CD4-positive, alpha-beta T cell (primary cell): ENCODE measurements at regions of chr1 and their contacts with region 1.

Region 1: GRCh38 chr1:25572708-25573600 is 29.5 kb downstream of the LDLRAP1 start:
- DNase-seq: peak in 13 of 14 experiments; percentile 31 to 73 (median 42)
- ATAC-seq: peak; percentile 82
- H3K4me3 ChIP-seq: no peak overlapping the region
- H3K4me3 Mint-ChIP-seq: no peak overlapping the region
- H3K27ac ChIP-seq: peak overlapping the region in 1 of 2 donors; percentile 8
- H3K27ac Mint-ChIP-seq: peak overlapping the region; percentile 87
- H3K4me1 ChIP-seq: peaks cover 58% of the 10 kb centered on the region
- H3K4me1 Mint-ChIP-seq: peaks cover 55% of the 10 kb centered on the region
- H3K27me3 ChIP-seq: no peaks in the 10 kb centered on the region
- H3K27me3 Mint-ChIP-seq: no peaks in the 10 kb centered on the region
- CTCF ChIP-seq: peak; percentile 73

Region 2: GRCh38 chr1:25392841-25393240 is 180.1 kb before region 1 on chr1:
- CTCF ChIA-PET with region 1: no interaction called
- POLR2A ChIA-PET with region 1: no interaction called
- intact Hi-C with region 1: no loop called
- DNase-seq: no peak
- ATAC-seq: no peak
- H3K4me3 ChIP-seq: no peak overlapping the region
- H3K4me3 Mint-ChIP-seq: no peak overlapping the region
- H3K27ac ChIP-seq: no peak overlapping the region
- H3K27ac Mint-ChIP-seq: no peak overlapping the region
- H3K4me1 ChIP-seq: no peaks in the 10 kb centered on the region
- H3K4me1 Mint-ChIP-seq: no peaks in the 10 kb centered on the region
- H3K27me3 ChIP-seq: no peaks in the 10 kb centered on the region
- H3K27me3 Mint-ChIP-seq: no peaks in the 10 kb centered on the region
- CTCF ChIP-seq: no peak

Region 3: DNA sequence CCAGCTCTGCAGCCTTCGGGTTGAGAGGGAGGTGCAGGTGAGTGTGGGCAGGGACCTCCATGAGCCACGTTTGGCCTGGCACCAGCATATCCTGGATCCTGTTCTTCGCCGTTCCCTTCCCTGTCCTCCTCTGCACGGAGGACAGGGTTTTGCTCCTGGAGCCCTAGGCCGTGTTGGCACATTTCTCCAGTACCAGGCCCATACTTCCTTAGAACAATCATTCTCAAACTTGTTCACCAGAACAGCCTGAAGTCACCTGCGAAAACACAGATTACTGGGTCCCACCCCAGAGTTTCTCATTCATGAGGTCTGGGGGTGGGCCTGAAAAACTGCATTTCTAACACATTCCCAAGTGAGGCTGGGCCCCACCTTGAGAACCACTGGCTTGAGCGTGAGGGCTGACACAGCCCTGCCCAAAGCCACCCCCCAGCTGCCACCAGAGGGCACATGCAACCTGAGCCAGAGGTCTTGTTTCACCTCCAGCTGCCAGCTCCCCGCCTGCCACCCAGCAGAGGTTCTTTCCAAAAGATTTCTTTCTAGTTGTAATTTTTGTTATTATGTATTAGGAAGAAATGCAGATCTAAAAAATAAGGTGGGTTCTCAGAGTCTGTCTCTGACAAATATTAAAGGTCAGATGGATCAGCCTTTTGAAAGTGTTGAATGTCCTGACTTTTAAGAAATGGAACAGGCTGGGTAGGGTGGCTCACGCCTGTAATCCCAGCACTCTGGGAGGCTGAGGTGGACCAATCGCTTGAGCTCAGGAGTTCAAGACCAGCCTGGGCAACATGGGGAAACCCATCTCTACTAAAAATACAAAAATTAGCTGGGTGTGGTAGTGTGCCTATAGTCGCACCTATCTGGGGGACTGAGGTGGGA is 69.2 kb before region 1 on chr1:
- CTCF ChIA-PET with region 1: interaction called, 4 read pairs
- POLR2A ChIA-PET with region 1: interaction called, 29 read pairs
- intact Hi-C with region 1: loop called in 1 of 2 experiments (anchors 10 kb)
- DNase-seq: peak; percentile 66 to 84 (median 76)
- ATAC-seq: peak; percentile 96
- H3K4me3 ChIP-seq: no peak overlapping the region
- H3K4me3 Mint-ChIP-seq: no peak overlapping the region
- H3K27ac ChIP-seq: no peak overlapping the region
- H3K27ac Mint-ChIP-seq: peak overlapping the region; percentile 84
- H3K4me1 ChIP-seq: peaks cover 27% of the 10 kb centered on the region
- H3K4me1 Mint-ChIP-seq: peaks cover 34% of the 10 kb centered on the region
- H3K27me3 ChIP-seq: no peaks in the 10 kb centered on the region
- H3K27me3 Mint-ChIP-seq: no peaks in the 10 kb centered on the region
- CTCF ChIP-seq: peak; percentile 86

Region 4: DNA sequence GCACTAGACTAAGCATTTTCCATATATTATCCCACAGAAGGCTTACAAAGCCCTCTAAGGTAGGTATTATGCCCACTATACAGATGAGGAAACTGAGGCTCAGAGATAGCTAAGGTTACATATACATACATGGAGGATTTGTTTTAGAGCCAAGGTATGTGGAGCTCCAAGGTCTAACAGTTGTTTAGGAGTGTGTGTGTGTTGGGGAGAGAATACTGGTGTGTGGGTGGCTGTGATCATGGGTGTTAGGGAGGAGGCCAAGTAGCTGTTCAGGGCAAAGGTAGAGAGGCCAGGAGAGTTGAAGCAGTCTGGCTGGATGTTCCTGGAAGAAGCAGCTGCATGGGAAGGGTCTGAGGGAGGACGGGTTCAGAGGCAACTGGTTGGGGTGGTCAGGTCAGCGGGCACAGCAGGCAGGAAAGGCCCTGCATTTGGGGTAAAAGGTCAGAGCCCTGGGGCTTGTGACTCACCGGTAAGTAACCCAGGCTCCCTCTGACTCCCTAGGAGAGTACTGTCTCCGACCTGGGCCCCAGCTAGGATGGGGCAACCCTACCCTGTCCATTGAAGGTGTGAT is 34.7 kb before region 1 on chr1:
- CTCF ChIA-PET with region 1: interaction called, 6 read pairs
- POLR2A ChIA-PET with region 1: interaction called, 193 read pairs
- intact Hi-C with region 1: loop called in 1 of 2 experiments (anchors 5 kb)
- DNase-seq: no peak
- ATAC-seq: no peak
- H3K4me3 ChIP-seq: no peak overlapping the region
- H3K4me3 Mint-ChIP-seq: no peak overlapping the region
- H3K27ac ChIP-seq: no peak overlapping the region
- H3K27ac Mint-ChIP-seq: no peak overlapping the region
- H3K4me1 ChIP-seq: peaks cover 4% of the 10 kb centered on the region
- H3K4me1 Mint-ChIP-seq: peaks cover 8% of the 10 kb centered on the region
- H3K27me3 ChIP-seq: no peaks in the 10 kb centered on the region
- H3K27me3 Mint-ChIP-seq: no peaks in the 10 kb centered on the region
- CTCF ChIP-seq: no peak

Region 5: DNA sequence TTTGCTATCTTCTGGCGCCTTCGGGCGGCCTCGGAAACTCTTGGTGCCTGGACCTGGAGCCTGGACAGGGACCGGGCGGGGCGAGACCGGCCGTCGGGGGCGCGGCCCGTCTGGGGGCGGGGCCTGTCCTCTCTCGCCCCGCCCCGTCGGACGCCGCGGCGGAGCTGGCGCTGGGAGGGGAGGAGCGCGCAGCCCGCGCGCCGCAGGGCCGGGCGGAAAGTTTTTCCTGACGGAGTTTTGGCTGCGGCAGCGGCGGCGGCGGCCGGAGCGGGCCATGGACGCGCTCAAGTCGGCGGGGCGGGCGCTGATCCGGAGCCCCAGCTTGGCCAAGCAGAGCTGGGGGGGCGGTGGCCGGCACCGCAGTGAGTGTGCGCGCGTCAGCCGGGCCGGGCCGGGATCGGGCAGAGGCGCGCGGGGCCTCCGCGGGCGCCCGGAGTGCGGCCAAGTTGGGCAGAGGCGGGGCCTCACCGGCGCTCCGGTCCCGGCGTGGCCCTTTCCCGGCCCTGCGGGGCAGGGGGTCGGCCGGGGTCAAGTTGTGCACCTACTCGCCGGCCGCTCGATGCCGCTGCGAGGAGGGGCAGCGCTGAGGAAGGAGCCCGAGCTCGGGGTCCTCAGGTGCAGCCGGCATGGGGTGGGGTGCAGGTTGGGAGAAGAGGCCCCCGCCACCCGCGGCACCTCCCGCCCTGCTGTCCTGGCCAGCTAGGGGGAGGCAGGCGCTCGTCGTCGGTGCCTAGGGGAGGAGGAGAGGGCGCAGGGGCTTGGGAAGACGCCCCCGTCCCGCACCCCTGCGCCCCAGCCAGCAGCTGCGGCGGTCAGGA is 29.3 kb before region 1 on chr1 and contains the start of gene LDLRAP1:
- CTCF ChIA-PET with region 1: no interaction called
- POLR2A ChIA-PET with region 1: interaction called, 193 read pairs
- intact Hi-C with region 1: loop called in 1 of 2 experiments (anchors 5 kb)
- DNase-seq: peak in 12 of 14 experiments; percentile 28 to 81 (median 56)
- ATAC-seq: peak; percentile 71
- H3K4me3 ChIP-seq: peak within 1 kb of the TSS; percentile 90
- H3K4me3 Mint-ChIP-seq: peak within 1 kb of the TSS; percentile 96
- H3K27ac ChIP-seq: peak within 1 kb of the TSS; percentile 55 to 60
- H3K27ac Mint-ChIP-seq: peak within 1 kb of the TSS; percentile 87
- H3K4me1 ChIP-seq: peaks cover 50% of the 10 kb centered on the region
- H3K4me1 Mint-ChIP-seq: peaks cover 47% of the 10 kb centered on the region
- H3K27me3 ChIP-seq: no peaks in the 10 kb centered on the region
- H3K27me3 Mint-ChIP-seq: no peaks in the 10 kb centered on the region
- CTCF ChIP-seq: no peak
- total RNA-seq, gene LDLRAP1: 70.5 to 73.5 TPM

Region 6: DNA sequence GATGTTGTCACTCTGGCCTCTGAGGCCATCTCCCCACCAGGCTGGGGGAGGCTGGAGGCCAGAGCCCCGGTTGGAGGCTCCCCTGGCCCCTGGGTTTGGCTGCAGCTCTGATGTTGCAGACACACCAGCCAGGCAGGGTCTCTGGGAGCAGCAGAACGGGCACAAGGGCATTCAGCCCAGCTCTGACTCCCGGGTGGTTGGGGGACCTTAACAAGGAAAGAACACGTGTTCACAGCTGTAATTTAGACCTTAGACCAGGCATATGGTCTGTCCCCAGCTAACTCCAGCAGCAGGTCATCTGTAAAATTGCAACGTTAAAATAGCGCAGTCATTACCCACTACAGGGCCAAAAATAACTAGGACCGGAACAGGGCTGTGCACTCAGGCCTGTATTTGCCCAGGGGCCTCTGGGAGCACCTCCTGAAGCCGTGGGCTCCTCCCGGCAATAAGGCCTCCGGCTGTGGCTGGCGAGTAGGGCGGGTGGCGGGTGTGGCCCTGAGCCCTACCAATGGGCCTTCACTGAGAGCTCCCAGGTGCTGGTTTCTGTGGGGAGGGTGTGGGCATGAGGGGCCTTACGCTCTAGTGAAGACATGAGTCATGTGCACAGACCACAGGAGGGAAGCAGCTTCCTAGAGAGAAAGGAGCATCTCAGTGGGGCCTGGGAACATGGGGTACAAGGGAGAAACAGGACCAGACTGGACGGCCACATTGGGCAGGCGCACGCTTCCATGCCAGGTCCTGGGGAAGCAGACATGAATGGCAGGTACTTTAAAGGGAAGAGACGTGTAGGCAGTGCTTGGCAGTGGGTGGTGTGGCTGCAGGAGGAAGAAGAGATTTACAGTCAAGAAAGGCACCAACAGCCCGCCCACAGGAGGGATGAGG is 23.4 kb before region 1 on chr1:
- CTCF ChIA-PET with region 1: interaction called, 6 read pairs
- POLR2A ChIA-PET with region 1: interaction called, 193 read pairs
- intact Hi-C with region 1: no loop called
- DNase-seq: peak; percentile 51 to 87 (median 74)
- ATAC-seq: peak; percentile 95
- H3K4me3 ChIP-seq: peak overlapping the region; percentile 35
- H3K4me3 Mint-ChIP-seq: peak overlapping the region; percentile 76
- H3K27ac ChIP-seq: peak overlapping the region; percentile 59 to 70
- H3K27ac Mint-ChIP-seq: peak overlapping the region; percentile 87
- H3K4me1 ChIP-seq: peaks cover 100% of the 10 kb centered on the region
- H3K4me1 Mint-ChIP-seq: peaks cover 95% of the 10 kb centered on the region
- H3K27me3 ChIP-seq: no peaks in the 10 kb centered on the region
- H3K27me3 Mint-ChIP-seq: no peaks in the 10 kb centered on the region
- CTCF ChIP-seq: no peak

Region 7: DNA sequence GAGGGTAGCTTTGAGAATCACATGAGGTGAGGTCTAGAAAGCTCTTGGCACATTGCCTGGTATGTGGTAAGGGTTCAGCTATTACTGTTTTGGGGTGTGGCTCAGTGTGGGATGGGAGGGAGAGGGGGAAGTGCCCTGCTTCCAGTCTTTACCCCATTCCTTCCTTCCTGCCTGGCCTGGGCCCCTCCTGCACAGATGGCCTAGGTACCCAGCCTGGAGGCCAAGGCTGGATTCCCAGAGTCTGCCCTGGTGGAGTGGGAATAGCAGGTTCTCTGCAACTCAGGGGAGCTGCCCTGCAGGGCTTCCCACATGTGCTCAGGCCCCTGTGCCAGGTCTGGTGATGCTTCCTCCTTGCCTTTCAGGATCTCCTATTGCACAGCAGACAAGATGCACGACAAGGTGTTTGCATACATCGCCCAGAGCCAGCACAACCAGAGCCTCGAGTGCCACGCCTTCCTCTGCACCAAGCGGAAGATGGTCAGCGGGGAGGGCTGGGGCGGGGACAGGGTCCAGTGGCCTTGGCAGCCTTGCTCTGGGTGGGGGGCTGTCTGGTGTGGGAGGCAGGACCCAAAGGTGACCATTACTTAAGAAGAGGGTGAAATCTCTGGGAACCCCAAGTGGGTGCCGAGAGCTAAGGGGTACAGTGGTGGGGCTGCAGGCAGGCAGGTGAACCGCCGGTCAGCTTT is 16.0 kb before region 1 on chr1:
- CTCF ChIA-PET with region 1: interaction called, 6 read pairs
- POLR2A ChIA-PET with region 1: interaction called, 193 read pairs
- intact Hi-C with region 1: no loop called
- DNase-seq: peak in 7 of 14 experiments; percentile 27 to 78 (median 71)
- ATAC-seq: peak; percentile 66
- H3K4me3 ChIP-seq: peak overlapping the region; percentile 5
- H3K4me3 Mint-ChIP-seq: peak overlapping the region; percentile 64
- H3K27ac ChIP-seq: peak overlapping the region; percentile 59 to 83
- H3K27ac Mint-ChIP-seq: peak overlapping the region; percentile 87
- H3K4me1 ChIP-seq: peaks cover 100% of the 10 kb centered on the region
- H3K4me1 Mint-ChIP-seq: peaks cover 100% of the 10 kb centered on the region
- H3K27me3 ChIP-seq: no peaks in the 10 kb centered on the region
- H3K27me3 Mint-ChIP-seq: no peaks in the 10 kb centered on the region
- CTCF ChIP-seq: no peak

Region 8: GRCh38 chr1:25608488-25609178 is 35.7 kb after region 1 on chr1:
- CTCF ChIA-PET with region 1: interaction called, 3 read pairs
- POLR2A ChIA-PET with region 1: interaction called, 11 read pairs
- intact Hi-C with region 1: no loop called
- DNase-seq: peak; percentile 78 to 95 (median 86)
- ATAC-seq: peak; percentile 99
- H3K4me3 ChIP-seq: peak overlapping the region; percentile 6
- H3K4me3 Mint-ChIP-seq: peak overlapping the region; percentile 45
- H3K27ac ChIP-seq: no peak overlapping the region
- H3K27ac Mint-ChIP-seq: no peak overlapping the region
- H3K4me1 ChIP-seq: peaks cover 17% of the 10 kb centered on the region
- H3K4me1 Mint-ChIP-seq: peaks cover 25% of the 10 kb centered on the region
- H3K27me3 ChIP-seq: no peaks in the 10 kb centered on the region
- H3K27me3 Mint-ChIP-seq: no peaks in the 10 kb centered on the region
- CTCF ChIP-seq: peak; percentile 71